SK-N-SH (cell line): ENCODE measurements at regions of chr21 and their contacts with region 1.

Region 1: DNA sequence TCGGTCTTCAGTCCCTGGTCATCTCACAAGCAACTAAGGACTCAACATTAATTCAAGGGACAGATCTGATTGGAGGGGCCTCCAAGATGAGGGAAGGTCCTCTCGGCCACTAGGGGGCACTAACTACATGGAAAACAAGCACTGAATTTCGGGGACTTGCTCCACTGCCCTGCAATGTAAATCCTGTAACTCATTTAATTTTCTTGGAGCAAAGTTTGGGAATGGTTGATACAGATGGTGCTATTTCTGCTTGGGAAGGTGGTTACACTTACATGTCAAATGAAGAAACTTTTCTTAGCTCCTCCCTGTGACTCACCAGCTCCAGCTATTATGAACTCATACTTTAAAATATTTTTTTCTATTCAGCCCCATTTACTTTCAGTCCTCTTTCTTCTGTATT is 97.4 kb upstream of the KCNJ15 start:
- DNase-seq: peak; percentile 57
- H3K4me3 ChIP-seq: no peak overlapping the region; a peak in 1 of 4 replicates
- H3K27ac ChIP-seq: no peak overlapping the region
- H3K4me1 ChIP-seq: no peaks in the 10 kb centered on the region
- H3K27me3 ChIP-seq: peaks cover 5% of the 10 kb centered on the region; the same call in 1 of the 2 replicates
- CTCF ChIP-seq: peak; percentile 96
- EP300 ChIP-seq: no peak
- RAD21 ChIP-seq: peak; percentile 75

Region 2: DNA sequence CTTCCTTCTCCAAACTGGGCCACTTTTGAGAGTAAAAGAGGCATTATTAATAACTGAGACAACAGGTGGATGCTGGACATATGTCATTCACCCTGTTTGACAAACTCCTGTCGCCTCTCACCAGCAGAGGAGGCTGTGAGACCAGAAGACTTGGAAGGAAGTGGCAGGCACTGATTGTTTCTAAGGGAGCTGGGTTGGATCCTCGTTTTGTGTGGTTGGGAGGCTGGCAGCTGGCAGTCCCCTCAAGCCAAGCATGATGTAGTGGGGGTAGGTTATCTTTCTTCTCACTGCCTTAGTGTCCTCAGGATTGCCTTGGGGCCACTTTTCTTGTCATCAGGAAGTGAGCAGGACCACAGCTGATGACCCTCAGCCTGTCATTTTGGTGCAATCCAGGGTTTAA is 10.9 kb after region 1 on chr21:
- CTCF ChIA-PET with region 1: interaction called, 10 read pairs
- POLR2A ChIA-PET with region 1: no interaction called
- DNase-seq: no peak
- H3K4me3 ChIP-seq: no peak overlapping the region
- H3K27ac ChIP-seq: no peak overlapping the region
- H3K4me1 ChIP-seq: peaks cover 0 to 10% of the 10 kb centered on the region in 2 experiments; a peak in 1 of 4 replicates
- H3K27me3 ChIP-seq: no peaks in the 10 kb centered on the region
- CTCF ChIP-seq: peak; percentile 51
- EP300 ChIP-seq: no peak
- RAD21 ChIP-seq: peak; percentile 37; the same call in 1 of the 2 replicates

Region 3: GRCh38 chr21:38181096-38181495 is 21.7 kb after region 1 on chr21:
- CTCF ChIA-PET with region 1: interaction called, 14 read pairs
- POLR2A ChIA-PET with region 1: no interaction called
- DNase-seq: no peak
- H3K4me3 ChIP-seq: no peak overlapping the region
- H3K27ac ChIP-seq: no peak overlapping the region
- H3K4me1 ChIP-seq: no peaks in the 10 kb centered on the region; a peak in 1 of 4 replicates
- H3K27me3 ChIP-seq: no peaks in the 10 kb centered on the region
- CTCF ChIP-seq: no peak
- EP300 ChIP-seq: no peak
- RAD21 ChIP-seq: no peak